Adrenal gland (tissue), 19 donors: ENCODE measurements at regions of chr2 and their contacts with region 1.

Region 1: GRCh38 chr2:189347540-189347939 is 93.7 kb upstream of the WDR75 start:
- DNase-seq: peak; percentile 60 to 84 (median 73)
- H3K4me3 ChIP-seq: no peak overlapping the region
- H3K27ac ChIP-seq: peak overlapping the region in 4 of 5 donors; percentile 30 to 79 (median 72)
- H3K4me1 ChIP-seq: peaks cover 0 to 15% of the 10 kb centered on the region in 2 donors
- H3K27me3 ChIP-seq: no peaks in the 10 kb centered on the region
- CTCF ChIP-seq: peak in 3 of 6 experiments; percentile 39 to 62 (median 50)
- POLR2A ChIP-seq: no peak

Region 2: GRCh38 chr2:188937228-188938220 is 410.0 kb before region 1 on chr2:
- intact Hi-C with region 1: no loop called
- DNase-seq: no peak
- H3K4me3 ChIP-seq: no peak overlapping the region
- H3K27ac ChIP-seq: peak overlapping the region in 1 of 5 donors; percentile 23
- H3K4me1 ChIP-seq: peaks cover 0 to 4% of the 10 kb centered on the region in 2 donors
- H3K27me3 ChIP-seq: no peaks in the 10 kb centered on the region
- CTCF ChIP-seq: no peak
- POLR2A ChIP-seq: no peak

Region 3: GRCh38 chr2:189412330-189412953 is 64.9 kb after region 1 on chr2:
- intact Hi-C with region 1: loop called in 1 of 2 experiments (anchors 10 kb)
- DNase-seq: peak in 5 of 7 donors; percentile 19 to 51 (median 35)
- H3K4me3 ChIP-seq: no peak overlapping the region
- H3K27ac ChIP-seq: no peak overlapping the region
- H3K4me1 ChIP-seq: peaks cover 0 to 8% of the 10 kb centered on the region in 2 donors
- H3K27me3 ChIP-seq: no peaks in the 10 kb centered on the region
- CTCF ChIP-seq: peak; percentile 53 to 90 (median 82)
- POLR2A ChIP-seq: no peak